CD4-positive, alpha-beta T cell (primary cell): ENCODE measurements at regions of chr22 and their contacts with region 1.

Region 1: GRCh38 chr22:41940832-41941765 is 5.9 kb downstream of the CENPM start:
- DNase-seq: peak; percentile 80 to 92 (median 86)
- ATAC-seq: peak; percentile 61
- H3K4me3 ChIP-seq: peak overlapping the region; percentile 18
- H3K4me3 Mint-ChIP-seq: peak overlapping the region; percentile 78
- H3K27ac ChIP-seq: peak overlapping the region; percentile 96 to 99
- H3K27ac Mint-ChIP-seq: peak overlapping the region; percentile 97
- H3K4me1 ChIP-seq: peaks cover 43% of the 10 kb centered on the region
- H3K4me1 Mint-ChIP-seq: peaks cover 39% of the 10 kb centered on the region
- H3K27me3 ChIP-seq: no peaks in the 10 kb centered on the region
- H3K27me3 Mint-ChIP-seq: no peaks in the 10 kb centered on the region
- CTCF ChIP-seq: peak; percentile 98

Region 2: DNA sequence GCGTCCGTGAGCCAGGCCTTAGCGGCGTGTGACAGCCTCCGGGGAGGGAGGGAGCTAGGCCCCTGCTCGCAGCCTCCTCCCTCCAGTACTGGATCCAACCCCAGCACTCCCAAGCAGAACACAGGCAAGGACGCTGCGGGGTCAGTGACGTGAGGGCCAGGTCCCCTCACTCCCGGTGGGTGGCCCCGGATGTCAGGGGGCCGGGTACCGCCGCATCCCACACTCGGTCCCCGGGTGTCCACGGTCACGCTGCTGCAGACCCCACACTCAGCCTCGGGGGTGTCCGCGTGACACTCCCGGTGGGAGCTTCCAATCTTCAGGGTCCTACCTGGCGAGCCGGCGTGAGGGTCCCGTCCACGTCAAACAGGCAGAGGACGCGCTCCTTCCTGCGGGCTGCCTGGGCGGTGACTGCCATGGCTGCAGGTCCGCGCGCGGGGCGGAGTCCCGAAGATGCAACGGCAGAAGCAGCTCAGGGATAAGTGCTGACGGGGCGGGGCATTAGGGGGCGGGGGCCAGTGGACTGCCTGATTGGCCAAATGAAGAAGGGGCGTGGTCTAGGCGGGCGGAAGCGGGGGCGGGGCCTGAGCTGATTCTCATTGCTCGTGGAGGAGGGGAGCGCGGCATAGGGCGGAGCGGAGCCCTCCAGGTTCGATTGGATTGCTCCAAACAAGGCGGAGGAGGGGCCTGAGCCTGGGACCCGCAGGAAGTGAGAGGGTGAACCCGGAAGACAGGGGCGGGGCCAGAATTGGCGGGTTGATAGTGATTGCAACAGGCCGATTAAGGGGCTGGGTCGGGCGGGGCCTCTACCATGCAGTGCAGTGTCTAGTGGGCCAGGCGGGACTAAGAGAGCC is 351.5 kb before region 1 on chr22 and contains the start of gene PMM1:
- CTCF ChIA-PET with region 1: interaction called, 3 read pairs
- POLR2A ChIA-PET with region 1: interaction called, 10 read pairs
- intact Hi-C with region 1: no loop called
- DNase-seq: peak; percentile 100
- ATAC-seq: peak; percentile 97
- H3K4me3 ChIP-seq: peak within 1 kb of the TSS; percentile 98
- H3K4me3 Mint-ChIP-seq: peak within 1 kb of the TSS; percentile 82
- H3K27ac ChIP-seq: peak within 1 kb of the TSS; percentile 29 to 64
- H3K27ac Mint-ChIP-seq: peak within 1 kb of the TSS; percentile 47
- H3K4me1 ChIP-seq: peaks cover 21% of the 10 kb centered on the region
- H3K4me1 Mint-ChIP-seq: peaks cover 17% of the 10 kb centered on the region
- H3K27me3 ChIP-seq: no peaks in the 10 kb centered on the region
- H3K27me3 Mint-ChIP-seq: no peaks in the 10 kb centered on the region
- CTCF ChIP-seq: no peak
- total RNA-seq, gene PMM1: 24.8 to 25.5 TPM

Region 3: GRCh38 chr22:41697126-41697775 is 243.8 kb before region 1 on chr22:
- CTCF ChIA-PET with region 1: interaction called, 12 read pairs
- POLR2A ChIA-PET with region 1: interaction called, 40 read pairs
- intact Hi-C with region 1: loop called (anchors 1 kb)
- DNase-seq: peak; percentile 84 to 98 (median 92)
- ATAC-seq: peak; percentile 78
- H3K4me3 ChIP-seq: peak overlapping the region; percentile 24
- H3K4me3 Mint-ChIP-seq: peak overlapping the region; percentile 59
- H3K27ac ChIP-seq: no peak overlapping the region
- H3K27ac Mint-ChIP-seq: no peak overlapping the region
- H3K4me1 ChIP-seq: peaks cover 24% of the 10 kb centered on the region
- H3K4me1 Mint-ChIP-seq: peaks cover 12% of the 10 kb centered on the region
- H3K27me3 ChIP-seq: no peaks in the 10 kb centered on the region
- H3K27me3 Mint-ChIP-seq: no peaks in the 10 kb centered on the region
- CTCF ChIP-seq: peak; percentile 98

Region 4: DNA sequence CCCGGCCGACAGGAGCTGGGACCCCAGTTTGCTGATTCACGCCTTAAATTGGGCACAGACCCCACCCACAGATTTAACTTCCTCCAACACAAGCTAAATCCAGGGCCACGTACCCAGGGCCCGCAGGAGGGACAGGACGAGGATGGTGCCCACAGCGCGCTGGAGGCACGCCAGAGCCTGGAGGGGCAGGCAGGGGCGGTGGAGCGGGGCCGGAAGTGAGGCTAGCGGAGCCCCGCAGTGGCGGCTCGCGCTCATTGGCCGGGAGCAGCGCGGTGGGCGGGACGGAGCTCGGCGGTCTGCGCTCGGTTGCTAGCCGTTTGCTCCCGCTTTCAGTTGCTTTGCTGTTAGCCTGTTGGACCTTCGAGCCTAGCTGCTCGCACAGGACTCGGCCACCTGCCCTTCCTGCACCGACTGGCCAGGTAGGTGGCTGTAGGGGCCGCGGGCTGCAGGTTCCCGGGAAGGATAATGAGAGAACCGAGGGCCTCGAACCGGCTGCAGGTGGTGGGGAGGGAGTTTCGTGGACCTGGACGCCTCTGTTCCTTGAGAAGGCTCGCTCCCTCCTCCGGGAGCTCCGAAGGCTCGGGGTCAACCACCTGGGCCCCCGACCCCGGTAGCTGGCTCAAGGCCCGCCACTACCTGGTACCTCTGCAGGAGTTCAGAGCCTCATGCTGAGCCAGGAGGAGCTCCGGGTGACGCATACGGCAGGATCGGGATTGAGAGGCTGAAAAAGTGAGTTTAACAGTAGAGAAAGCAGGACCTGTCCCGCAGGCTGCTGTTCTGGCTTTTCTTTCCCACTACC is 140.6 kb before region 1 on chr22 and contains the start of gene CCDC134:
- CTCF ChIA-PET with region 1: interaction called, 4 read pairs
- POLR2A ChIA-PET with region 1: interaction called, 56 read pairs
- intact Hi-C with region 1: no loop called
- DNase-seq: peak; percentile 85 to 95 (median 90)
- ATAC-seq: peak; percentile 95
- H3K4me3 ChIP-seq: peak within 1 kb of the TSS; percentile 80
- H3K4me3 Mint-ChIP-seq: peak within 1 kb of the TSS; percentile 98
- H3K27ac ChIP-seq: peak within 1 kb of the TSS; percentile 87 to 91
- H3K27ac Mint-ChIP-seq: peak within 1 kb of the TSS; percentile 100
- H3K4me1 ChIP-seq: peaks cover 34% of the 10 kb centered on the region
- H3K4me1 Mint-ChIP-seq: peaks cover 40% of the 10 kb centered on the region
- H3K27me3 ChIP-seq: no peaks in the 10 kb centered on the region
- H3K27me3 Mint-ChIP-seq: no peaks in the 10 kb centered on the region
- CTCF ChIP-seq: no peak
- total RNA-seq, gene CCDC134: 14.1 to 16.2 TPM

Region 5: DNA sequence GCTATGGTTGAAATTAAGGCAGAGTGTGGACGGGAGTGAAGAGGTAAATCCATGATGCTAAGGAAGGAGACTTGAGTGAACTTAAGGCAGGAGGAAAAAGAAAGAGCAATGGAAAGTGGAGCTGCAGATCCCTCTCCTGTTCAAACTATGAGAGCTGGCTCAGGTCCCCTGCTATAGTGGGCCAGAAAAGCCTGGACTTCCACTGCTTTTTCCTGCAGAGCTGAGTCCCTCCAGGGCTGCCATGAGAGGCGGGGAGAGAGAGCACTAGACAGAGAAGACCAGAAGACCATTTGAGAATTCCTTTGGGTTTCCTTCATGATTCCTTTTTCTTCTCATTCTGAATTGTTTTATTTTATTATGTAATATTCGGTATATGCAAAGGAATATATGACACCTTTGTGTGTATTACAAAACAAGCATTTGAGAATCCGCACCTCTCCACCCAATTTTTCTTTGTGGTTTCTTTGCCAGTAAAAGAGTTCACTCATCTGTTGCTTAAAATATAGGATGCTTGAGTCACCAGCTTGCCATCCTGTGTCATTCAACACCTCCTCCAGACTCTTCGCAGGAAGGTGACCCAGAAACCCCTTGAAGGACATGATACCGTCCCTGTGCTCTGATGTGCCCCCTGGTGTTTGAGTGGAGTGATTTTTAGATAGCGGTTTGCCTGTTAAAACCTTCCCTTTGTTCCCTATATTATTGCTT is 83.8 kb before region 1 on chr22:
- CTCF ChIA-PET with region 1: interaction called, 8 read pairs
- POLR2A ChIA-PET with region 1: interaction called, 17 read pairs
- intact Hi-C with region 1: loop called in 1 of 2 experiments (anchors 1 kb)
- DNase-seq: peak; percentile 46 to 89 (median 63)
- ATAC-seq: peak; percentile 75
- H3K4me3 ChIP-seq: no peak overlapping the region
- H3K4me3 Mint-ChIP-seq: peak overlapping the region; percentile 13
- H3K27ac ChIP-seq: no peak overlapping the region
- H3K27ac Mint-ChIP-seq: peak overlapping the region; percentile 59
- H3K4me1 ChIP-seq: peaks cover 49% of the 10 kb centered on the region
- H3K4me1 Mint-ChIP-seq: peaks cover 45% of the 10 kb centered on the region
- H3K27me3 ChIP-seq: no peaks in the 10 kb centered on the region
- H3K27me3 Mint-ChIP-seq: no peaks in the 10 kb centered on the region
- CTCF ChIP-seq: peak; percentile 72

Region 6: DNA sequence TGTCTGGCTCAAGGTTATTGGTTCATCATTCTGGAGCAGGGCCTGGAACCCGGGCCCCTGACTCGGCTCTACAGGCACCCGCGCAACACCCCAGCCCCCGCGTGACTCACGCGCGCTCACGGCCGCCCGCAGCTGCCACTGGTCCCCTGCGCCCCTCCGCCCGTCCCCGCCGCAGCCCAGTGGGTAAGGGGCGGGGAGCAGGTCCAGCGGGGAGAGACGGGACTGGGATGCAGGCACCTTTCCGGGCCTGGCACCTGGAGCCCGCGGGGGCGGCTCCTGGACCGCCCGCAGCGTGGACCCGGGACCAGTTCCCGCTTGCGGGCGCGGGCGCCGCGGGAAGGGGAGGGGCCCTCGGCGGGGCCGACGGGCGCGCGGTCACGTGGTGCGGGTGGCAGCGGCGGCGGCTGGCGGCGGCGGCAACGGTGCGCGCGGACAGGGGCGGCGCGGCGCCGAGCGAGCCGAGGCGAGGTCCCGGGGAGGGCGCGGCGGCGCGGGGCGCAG is 35.4 kb after region 1 on chr22:
- CTCF ChIA-PET with region 1: no interaction called
- POLR2A ChIA-PET with region 1: no interaction called
- intact Hi-C with region 1: no loop called
- DNase-seq: peak in 10 of 14 experiments; percentile 29 to 79 (median 56)
- ATAC-seq: peak; percentile 72
- H3K4me3 ChIP-seq: peak overlapping the region; percentile 12
- H3K4me3 Mint-ChIP-seq: peak overlapping the region; percentile 59
- H3K27ac ChIP-seq: no peak overlapping the region
- H3K27ac Mint-ChIP-seq: no peak overlapping the region
- H3K4me1 ChIP-seq: peaks cover 12% of the 10 kb centered on the region
- H3K4me1 Mint-ChIP-seq: no peaks in the 10 kb centered on the region
- H3K27me3 ChIP-seq: peaks cover 33 to 36% of the 10 kb centered on the region in 2 experiments
- H3K27me3 Mint-ChIP-seq: peaks cover 60% of the 10 kb centered on the region
- CTCF ChIP-seq: no peak

Region 7: GRCh38 chr22:42079319-42080251 is 138.5 kb after region 1 on chr22 and contains the start of gene SMDT1:
- CTCF ChIA-PET with region 1: no interaction called
- POLR2A ChIA-PET with region 1: interaction called, 13 read pairs
- intact Hi-C with region 1: no loop called
- DNase-seq: peak; percentile 96 to 99 (median 98)
- ATAC-seq: peak; percentile 91
- H3K4me3 ChIP-seq: peak within 1 kb of the TSS; percentile 73
- H3K4me3 Mint-ChIP-seq: peak within 1 kb of the TSS; percentile 93
- H3K27ac ChIP-seq: peak within 1 kb of the TSS; percentile 98 to 99
- H3K27ac Mint-ChIP-seq: peak within 1 kb of the TSS; percentile 97
- H3K4me1 ChIP-seq: peaks cover 50% of the 10 kb centered on the region
- H3K4me1 Mint-ChIP-seq: peaks cover 56% of the 10 kb centered on the region
- H3K27me3 ChIP-seq: no peaks in the 10 kb centered on the region
- H3K27me3 Mint-ChIP-seq: no peaks in the 10 kb centered on the region
- CTCF ChIP-seq: no peak
- total RNA-seq, gene SMDT1: 84.7 to 86.4 TPM